SK-N-SH (cell line): ENCODE measurements at regions of chr3 and their contacts with region 1.

Region 1: DNA sequence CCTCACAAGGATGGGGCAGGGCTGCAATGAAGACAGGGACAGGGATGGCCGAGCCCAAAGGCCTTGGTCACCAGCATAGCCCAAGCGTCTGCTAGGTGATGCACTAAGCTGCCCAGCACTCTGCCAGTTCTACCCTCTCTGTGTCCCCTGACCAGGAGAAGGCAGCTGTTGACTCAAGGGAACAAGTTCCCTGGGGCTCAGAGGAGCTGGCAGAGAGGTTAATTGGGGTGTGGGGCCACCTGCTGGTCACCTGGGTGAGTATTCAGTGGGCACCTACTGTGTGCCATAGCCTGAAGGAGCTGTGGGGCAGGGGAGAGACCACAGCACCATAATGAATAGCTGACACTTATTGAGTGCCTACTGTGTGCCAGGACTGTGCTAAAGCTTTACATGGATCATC is 22.0 kb upstream of the DOCK3 start:
- DNase-seq: peak; percentile 45
- H3K4me3 ChIP-seq: no peak overlapping the region
- H3K27ac ChIP-seq: no peak overlapping the region
- H3K4me1 ChIP-seq: peaks cover 0 to 31% of the 10 kb centered on the region in 2 experiments; a peak in 1 of 4 replicates
- H3K27me3 ChIP-seq: no peaks in the 10 kb centered on the region
- CTCF ChIP-seq: peak; percentile 49
- EP300 ChIP-seq: no peak
- RAD21 ChIP-seq: peak; percentile 58

Region 2: GRCh38 chr3:50627407-50628051 is 25.2 kb before region 1 on chr3:
- CTCF ChIA-PET with region 1: interaction called, 13 read pairs
- POLR2A ChIA-PET with region 1: interaction called, 3 read pairs
- DNase-seq: peak; percentile 49
- H3K4me3 ChIP-seq: no peak overlapping the region
- H3K27ac ChIP-seq: 0 out of 4 replicates have a peak overlapping the region, but pooled peaks of 1 of the 2 experiments have one; percentile 28
- H3K4me1 ChIP-seq: peaks cover 11 to 34% of the 10 kb centered on the region in 2 experiments; a peak in 3 of 4 replicates
- H3K27me3 ChIP-seq: no peaks in the 10 kb centered on the region
- CTCF ChIP-seq: peak; percentile 56
- EP300 ChIP-seq: no peak
- RAD21 ChIP-seq: peak; percentile 74

Region 3: GRCh38 chr3:50674349-50675178 is 21.9 kb after region 1 on chr3 and contains the start of gene DOCK3:
- CTCF ChIA-PET with region 1: interaction called, 10 read pairs
- POLR2A ChIA-PET with region 1: no interaction called
- DNase-seq: peak; percentile 94
- H3K4me3 ChIP-seq: peak within 1 kb of the TSS; percentile 25 to 45; a peak in 3 of 4 replicates
- H3K27ac ChIP-seq: no peak within 1 kb of the TSS
- H3K4me1 ChIP-seq: peaks cover 0 to 4% of the 10 kb centered on the region in 2 experiments; a peak in 1 of 4 replicates
- H3K27me3 ChIP-seq: peaks cover 56% of the 10 kb centered on the region
- CTCF ChIP-seq: no peak
- EP300 ChIP-seq: no peak
- RAD21 ChIP-seq: no peak
- polyA plus RNA-seq, gene DOCK3: 0.05 TPM in 2 replicates

Region 4: DNA sequence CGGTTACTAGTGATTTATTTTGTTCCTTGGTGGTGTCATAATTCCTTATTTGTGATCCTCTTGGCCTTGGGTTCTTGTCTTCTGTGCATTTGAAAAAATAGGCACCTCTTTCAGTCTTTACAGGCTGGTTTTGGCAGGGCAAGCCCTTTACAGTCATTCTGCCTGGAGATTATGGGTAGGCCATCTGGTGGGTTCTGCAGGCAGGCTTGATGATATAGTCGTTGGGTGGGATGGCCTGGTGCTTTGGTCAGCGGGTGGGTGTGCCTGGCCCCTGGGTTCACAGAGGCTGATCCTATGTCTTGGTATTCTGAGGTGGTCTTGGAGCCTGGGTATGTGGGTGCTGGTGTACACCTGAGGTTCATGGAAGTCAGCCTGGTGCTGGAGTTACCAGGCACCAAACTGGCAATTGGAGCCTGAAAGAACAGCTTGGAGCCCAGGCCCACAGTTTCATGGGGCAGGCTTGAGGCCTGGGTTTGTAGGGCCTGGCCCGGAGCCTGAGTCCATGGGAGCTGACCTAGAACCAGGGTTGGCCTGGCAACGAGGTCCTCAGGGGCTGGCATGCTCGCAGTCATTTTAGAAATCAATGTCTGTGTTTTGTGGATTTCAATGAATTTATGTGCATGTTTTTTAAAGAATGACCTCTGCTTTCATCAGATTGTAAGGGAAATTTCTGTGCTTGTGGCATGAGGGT is 85.3 kb after region 1 on chr3:
- CTCF ChIA-PET with region 1: no interaction called
- POLR2A ChIA-PET with region 1: no interaction called
- DNase-seq: no peak
- H3K4me3 ChIP-seq: no peak overlapping the region
- H3K27ac ChIP-seq: no peak overlapping the region
- H3K4me1 ChIP-seq: no peaks in the 10 kb centered on the region
- H3K27me3 ChIP-seq: no peaks in the 10 kb centered on the region
- CTCF ChIP-seq: no peak
- EP300 ChIP-seq: no peak
- RAD21 ChIP-seq: no peak